ENCODE measurements at regions of chr7 and their contacts with region 1.

Region 1: GRCh38 chr7:322111-322671 is 32.2 kb downstream of the FOXL3 start:
- DNase-seq: peak; percentile 72 to 89 (median 81)
- H3K4me3 ChIP-seq: no peak overlapping the region
- H3K4me3 Mint-ChIP-seq: peak overlapping the region in 1 of 8 donors; percentile 23
- H3K27ac ChIP-seq: no peak overlapping the region
- H3K27ac Mint-ChIP-seq: no peak overlapping the region
- H3K4me1 ChIP-seq: peaks cover 7% of the 10 kb centered on the region
- H3K4me1 Mint-ChIP-seq: peaks cover 0 to 2% (median 0%) of the 10 kb centered on the region in 4 donors
- H3K27me3 ChIP-seq: peaks cover 4% of the 10 kb centered on the region
- H3K27me3 Mint-ChIP-seq: peaks cover 24 to 25% of the 10 kb centered on the region in 2 donors

Region 2: DNA sequence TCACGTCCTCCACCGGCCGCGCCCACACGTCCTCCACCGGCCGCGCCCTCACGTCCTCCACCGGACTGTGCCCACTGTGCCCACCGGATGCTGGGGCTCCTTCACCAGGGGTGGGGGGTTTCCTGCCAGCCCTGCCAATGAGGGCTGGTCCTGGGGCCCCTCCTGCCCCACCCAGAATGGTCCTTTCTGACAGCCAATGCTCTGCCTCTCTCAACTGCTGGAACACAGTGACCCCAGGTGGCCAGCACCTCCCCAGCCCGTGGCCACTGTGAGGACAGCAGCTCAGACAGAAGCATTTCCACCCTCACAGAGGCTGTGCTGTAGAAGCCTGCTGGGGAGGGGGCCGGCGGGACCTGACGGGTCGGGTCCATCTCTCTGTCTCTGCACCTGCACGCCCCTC is 314.2 kb after region 1 on chr7:
- CTCF ChIA-PET with region 1: interaction called, 4 read pairs
- POLR2A ChIA-PET with region 1: no interaction called
- intact Hi-C with region 1: loop called (anchors 2 kb)
- DNase-seq: peak; percentile 45 to 57 (median 51)
- H3K4me3 ChIP-seq: no peak overlapping the region
- H3K4me3 Mint-ChIP-seq: peak overlapping the region in 1 of 8 donors; percentile 41
- H3K27ac ChIP-seq: no peak overlapping the region
- H3K27ac Mint-ChIP-seq: peak overlapping the region in 3 of 7 donors; percentile 76 to 82 (median 82)
- H3K4me1 ChIP-seq: peaks cover 4% of the 10 kb centered on the region
- H3K4me1 Mint-ChIP-seq: peaks cover 8 to 26% (median 10%) of the 10 kb centered on the region in 4 donors
- H3K27me3 ChIP-seq: no peaks in the 10 kb centered on the region
- H3K27me3 Mint-ChIP-seq: no peaks in the 10 kb centered on the region

Region 3: GRCh38 chr7:774161-775109 is 452.2 kb after region 1 on chr7:
- CTCF ChIA-PET with region 1: interaction called, 19 read pairs
- POLR2A ChIA-PET with region 1: no interaction called
- intact Hi-C with region 1: loop called (anchors 1 kb)
- DNase-seq: peak; percentile 46 to 70 (median 60)
- H3K4me3 ChIP-seq: no peak overlapping the region
- H3K4me3 Mint-ChIP-seq: no peak overlapping the region
- H3K27ac ChIP-seq: no peak overlapping the region
- H3K27ac Mint-ChIP-seq: no peak overlapping the region
- H3K4me1 ChIP-seq: no peaks in the 10 kb centered on the region
- H3K4me1 Mint-ChIP-seq: peaks cover 0 to 1% (median 0%) of the 10 kb centered on the region in 4 donors
- H3K27me3 ChIP-seq: no peaks in the 10 kb centered on the region
- H3K27me3 Mint-ChIP-seq: no peaks in the 10 kb centered on the region

Region 4: GRCh38 chr7:854118-854775 is 532.1 kb after region 1 on chr7:
- CTCF ChIA-PET with region 1: no interaction called
- POLR2A ChIA-PET with region 1: no interaction called
- intact Hi-C with region 1: no loop called
- DNase-seq: no peak
- H3K4me3 ChIP-seq: no peak overlapping the region
- H3K4me3 Mint-ChIP-seq: no peak overlapping the region
- H3K27ac ChIP-seq: no peak overlapping the region
- H3K27ac Mint-ChIP-seq: no peak overlapping the region
- H3K4me1 ChIP-seq: no peaks in the 10 kb centered on the region
- H3K4me1 Mint-ChIP-seq: no peaks in the 10 kb centered on the region
- H3K27me3 ChIP-seq: no peaks in the 10 kb centered on the region
- H3K27me3 Mint-ChIP-seq: no peaks in the 10 kb centered on the region

Region 5: GRCh38 chr7:1716263-1717094 is 1394.3 kb after region 1 on chr7:
- CTCF ChIA-PET with region 1: no interaction called
- POLR2A ChIA-PET with region 1: no interaction called
- intact Hi-C with region 1: no loop called
- DNase-seq: no peak
- H3K4me3 ChIP-seq: no peak overlapping the region
- H3K4me3 Mint-ChIP-seq: peak overlapping the region in 3 of 8 donors; percentile 7 to 25 (median 17)
- H3K27ac ChIP-seq: no peak overlapping the region
- H3K27ac Mint-ChIP-seq: peak overlapping the region in 1 of 7 donors; percentile 60
- H3K4me1 ChIP-seq: peaks cover 3% of the 10 kb centered on the region
- H3K4me1 Mint-ChIP-seq: peaks cover 0 to 7% (median 4%) of the 10 kb centered on the region in 4 donors
- H3K27me3 ChIP-seq: no peaks in the 10 kb centered on the region
- H3K27me3 Mint-ChIP-seq: peaks cover 0 to 7% of the 10 kb centered on the region in 2 donors